Cardiac septum (tissue), 1 donor: ENCODE measurements at regions of chr1 and their contacts with region 1.

Region 1: GRCh38 chr1:230426246-230427093 is at the start of gene PGBD5:
- DNase-seq: peak; percentile 80
- total RNA-seq, gene PGBD5: 14.0 TPM

Region 2: GRCh38 chr1:230407351-230407750 is 19.1 kb before region 1 on chr1:
- intact Hi-C with region 1: no loop called
- DNase-seq: no peak

Region 3: GRCh38 chr1:230642263-230642959 is 215.9 kb after region 1 on chr1 and contains the start of gene COG2:
- intact Hi-C with region 1: loop called (anchors 2 kb)
- DNase-seq: peak; percentile 96
- total RNA-seq, gene COG2: 19.4 TPM

Region 4: GRCh38 chr1:230681599-230681998 is 255.1 kb after region 1 on chr1:
- intact Hi-C with region 1: no loop called
- DNase-seq: no peak